ENCODE measurements at regions of chr2 and their contacts with region 1.

Region 1: GRCh38 chr2:17830053-17831034 is 14.1 kb downstream of the MSGN1 start:
- DNase-seq: peak; percentile 87
- ATAC-seq: peak; percentile 99
- H3K4me3 ChIP-seq: peak overlapping the region in 1 of 3 experiments; percentile 47; a peak in 2 of 6 replicates
- H3K27ac ChIP-seq: no peak overlapping the region
- H3K4me1 ChIP-seq: peaks cover 11% of the 10 kb centered on the region
- H3K27me3 ChIP-seq: peaks cover 0 to 33% of the 10 kb centered on the region in 2 experiments; a peak in 1 of 5 replicates
- CTCF ChIP-seq: peak; percentile 97
- EP300 ChIP-seq: no peak; a peak in 1 of 4 replicates
- POLR2A ChIP-seq: no peak
- RAD21 ChIP-seq: peak; percentile 84

Region 2: GRCh38 chr2:17719562-17720371 is 110.6 kb before region 1 on chr2:
- CTCF ChIA-PET with region 1: interaction called, 17 read pairs
- POLR2A ChIA-PET with region 1: no interaction called
- in situ Hi-C with region 1: no loop called
- intact Hi-C with region 1: loop called (anchors 1 kb)
- DNase-seq: no peak
- ATAC-seq: peak; percentile 59
- H3K4me3 ChIP-seq: no peak overlapping the region
- H3K27ac ChIP-seq: no peak overlapping the region
- H3K4me1 ChIP-seq: no peaks in the 10 kb centered on the region
- H3K27me3 ChIP-seq: no peaks in the 10 kb centered on the region
- CTCF ChIP-seq: peak; percentile 65
- EP300 ChIP-seq: no peak
- POLR2A ChIP-seq: no peak
- RAD21 ChIP-seq: no peak

Region 3: GRCh38 chr2:17753803-17754663 is 76.3 kb before region 1 on chr2 and contains the starts of genes GEN1 and SMC6:
- CTCF ChIA-PET with region 1: no interaction called
- POLR2A ChIA-PET with region 1: no interaction called
- in situ Hi-C with region 1: no loop called
- intact Hi-C with region 1: loop called (anchors 1 kb)
- DNase-seq: peak; percentile 92
- ATAC-seq: peak; percentile 88
- H3K4me3 ChIP-seq: peak within 1 kb of the TSS; percentile 82 to 95 (median 93)
- H3K27ac ChIP-seq: peak within 1 kb of the TSS; percentile 99
- H3K4me1 ChIP-seq: peaks cover 54% of the 10 kb centered on the region
- H3K27me3 ChIP-seq: no peaks in the 10 kb centered on the region; a peak in 1 of 5 replicates
- CTCF ChIP-seq: no peak
- EP300 ChIP-seq: peak in 1 of 2 experiments; percentile 16; a peak in 1 of 4 replicates
- POLR2A ChIP-seq: peak; percentile 15 to 45; a peak in 3 of 4 replicates
- RAD21 ChIP-seq: peak; percentile 30
- total RNA-seq, gene GEN1: 26.6 and 27.1 TPM in 2 replicates
- total RNA-seq, gene SMC6: 55.3 and 69.4 TPM in 2 replicates

Measured in HepG2 (cell line).